AG04449 (cell line): ENCODE measurements at regions of chr12 and their contacts with region 1.

Region 1: GRCh38 chr12:106841510-106842302 is 67.2 kb downstream of the RIC8B start:
- DNase-seq: no peak
- H3K4me3 ChIP-seq: no peak overlapping the region
- CTCF ChIP-seq: peak; percentile 44

Region 2: DNA sequence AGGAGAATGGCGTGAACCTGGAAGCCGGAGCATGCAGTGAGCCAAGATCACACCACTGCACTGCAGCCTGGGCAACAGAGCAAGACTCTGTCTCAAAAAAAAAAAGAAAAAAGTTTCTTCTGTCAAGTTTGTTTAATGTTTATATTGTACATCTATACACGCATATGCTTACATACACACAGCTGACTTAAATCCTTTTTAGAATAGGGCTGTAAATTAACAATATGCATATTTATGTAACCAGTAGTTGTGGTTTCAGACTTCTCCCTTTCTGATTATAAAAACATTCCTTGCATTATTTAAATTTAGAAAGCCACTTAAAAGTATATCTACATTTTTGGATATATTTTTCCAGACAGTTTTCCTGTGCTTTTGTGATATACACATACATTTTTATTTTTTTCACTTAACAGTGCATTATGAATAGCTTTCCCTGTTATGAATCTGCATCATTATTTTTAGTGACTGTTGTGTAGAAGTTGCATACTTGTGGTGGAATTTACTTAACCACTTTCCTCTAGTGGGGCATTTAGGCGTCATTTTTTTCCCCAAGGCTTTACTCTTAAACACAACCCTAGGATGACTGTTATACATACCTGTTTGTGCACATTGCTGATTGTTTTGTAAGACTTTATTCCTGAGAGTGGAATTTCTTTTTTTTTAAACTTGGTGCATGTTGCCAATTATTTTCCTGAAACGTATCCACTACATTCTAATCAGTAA is 454.7 kb before region 1 on chr12:
- CTCF ChIA-PET with region 1: interaction called, 46 read pairs
- POLR2A ChIA-PET with region 1: no interaction called
- DNase-seq: peak; percentile 74
- H3K4me3 ChIP-seq: no peak overlapping the region
- CTCF ChIP-seq: no peak

Region 3: DNA sequence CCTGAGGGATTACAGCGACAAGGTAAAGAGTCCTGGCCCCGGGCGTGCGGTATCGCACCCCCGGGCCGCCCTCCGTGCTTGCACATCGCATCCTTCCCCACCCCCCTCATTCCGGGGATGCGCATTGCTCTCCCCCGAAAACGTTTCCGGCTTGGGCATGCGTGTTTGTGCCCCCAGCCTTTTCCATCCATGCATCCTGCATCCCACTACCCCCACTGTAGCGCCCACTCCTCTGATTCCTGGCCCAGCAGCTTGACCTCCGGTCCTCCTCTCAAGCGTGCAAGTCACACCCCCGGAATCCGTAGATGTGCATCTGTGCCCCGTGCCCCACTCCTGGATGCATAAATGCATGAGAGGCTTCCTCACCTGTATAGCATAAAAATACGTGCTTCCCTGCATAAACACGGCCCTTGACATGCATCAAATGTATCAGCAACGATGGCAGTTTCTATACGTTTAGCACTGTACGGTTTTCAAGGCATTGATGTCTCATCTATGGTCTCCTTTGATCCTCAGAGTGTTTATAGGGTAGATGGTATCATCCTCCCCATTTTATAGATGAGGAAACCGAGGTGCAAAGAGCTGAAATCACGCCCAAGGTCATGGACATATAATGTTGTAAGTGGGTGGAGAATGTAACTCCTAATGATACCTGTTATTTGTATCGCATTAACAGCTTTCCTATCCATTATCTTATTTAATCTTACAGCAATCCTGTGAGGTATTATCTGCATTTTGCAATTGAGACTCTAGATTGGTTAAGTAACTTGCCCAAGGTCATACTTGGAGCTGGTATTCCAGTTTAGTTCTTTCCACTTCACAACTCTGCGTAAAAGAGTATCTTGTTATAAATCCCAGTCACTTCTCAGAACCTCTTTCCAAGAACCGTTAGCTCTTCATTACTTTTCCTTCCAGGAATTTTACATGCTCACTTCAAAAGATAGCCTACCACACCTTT is 66.6 kb before region 1 on chr12:
- CTCF ChIA-PET with region 1: interaction called, 10 read pairs
- POLR2A ChIA-PET with region 1: no interaction called
- DNase-seq: no peak
- H3K4me3 ChIP-seq: peak overlapping the region; percentile 92
- CTCF ChIP-seq: no peak

Region 4: GRCh38 chr12:106831699-106832098 is 10.0 kb before region 1 on chr12:
- CTCF ChIA-PET with region 1: interaction called, 20 read pairs
- POLR2A ChIA-PET with region 1: no interaction called
- DNase-seq: no peak
- H3K4me3 ChIP-seq: no peak overlapping the region
- CTCF ChIP-seq: no peak

Region 5: DNA sequence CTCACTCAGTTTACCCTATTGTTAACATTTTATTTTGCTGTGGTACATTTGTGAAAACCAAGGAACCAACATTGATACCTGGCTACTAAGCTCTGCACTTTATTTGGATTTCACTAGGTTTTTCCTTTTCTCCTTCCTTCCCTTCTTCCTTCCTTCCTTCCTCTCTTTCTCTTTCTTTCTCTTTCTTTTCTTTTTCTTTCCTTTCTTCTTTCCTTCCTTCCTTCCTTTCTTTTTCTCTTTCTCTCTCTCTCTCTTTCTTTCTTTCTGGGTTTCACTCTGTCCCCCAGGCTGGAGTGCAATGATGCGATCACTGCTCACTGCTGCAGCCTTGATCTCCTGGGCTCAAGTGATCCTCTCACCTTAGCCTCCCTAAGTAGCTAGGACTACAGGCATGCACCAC is 85.0 kb after region 1 on chr12:
- CTCF ChIA-PET with region 1: no interaction called
- POLR2A ChIA-PET with region 1: no interaction called
- DNase-seq: no peak
- H3K4me3 ChIP-seq: no peak overlapping the region
- CTCF ChIP-seq: no peak

Region 6: DNA sequence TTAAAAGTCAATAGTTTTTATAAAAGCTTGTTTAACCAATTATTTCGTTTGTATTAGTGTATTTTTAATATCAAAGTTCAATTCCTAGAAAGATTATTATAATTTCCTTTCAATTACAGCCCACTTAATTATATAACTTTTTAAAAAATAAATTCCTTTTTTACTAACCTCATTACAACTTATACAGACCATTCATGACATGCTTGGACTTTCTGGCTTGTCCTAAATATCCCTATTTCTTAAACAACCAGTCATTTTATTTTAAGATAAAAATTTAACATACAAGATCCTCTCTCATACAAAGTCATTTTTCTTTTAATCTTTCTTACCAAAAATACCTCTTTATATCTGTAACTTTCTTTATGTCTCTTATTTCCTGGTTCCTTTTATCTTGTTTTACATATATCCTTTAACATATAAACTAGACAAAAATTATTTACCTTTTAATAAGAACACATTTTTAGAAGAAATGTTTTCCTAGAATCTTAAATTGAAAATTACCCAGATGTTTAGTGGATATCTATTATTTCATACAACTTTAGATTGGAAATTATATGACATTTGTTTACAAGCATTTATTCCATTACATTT is 103.7 kb after region 1 on chr12:
- CTCF ChIA-PET with region 1: no interaction called
- POLR2A ChIA-PET with region 1: no interaction called
- DNase-seq: no peak
- H3K4me3 ChIP-seq: no peak overlapping the region
- CTCF ChIP-seq: no peak

Region 7: DNA sequence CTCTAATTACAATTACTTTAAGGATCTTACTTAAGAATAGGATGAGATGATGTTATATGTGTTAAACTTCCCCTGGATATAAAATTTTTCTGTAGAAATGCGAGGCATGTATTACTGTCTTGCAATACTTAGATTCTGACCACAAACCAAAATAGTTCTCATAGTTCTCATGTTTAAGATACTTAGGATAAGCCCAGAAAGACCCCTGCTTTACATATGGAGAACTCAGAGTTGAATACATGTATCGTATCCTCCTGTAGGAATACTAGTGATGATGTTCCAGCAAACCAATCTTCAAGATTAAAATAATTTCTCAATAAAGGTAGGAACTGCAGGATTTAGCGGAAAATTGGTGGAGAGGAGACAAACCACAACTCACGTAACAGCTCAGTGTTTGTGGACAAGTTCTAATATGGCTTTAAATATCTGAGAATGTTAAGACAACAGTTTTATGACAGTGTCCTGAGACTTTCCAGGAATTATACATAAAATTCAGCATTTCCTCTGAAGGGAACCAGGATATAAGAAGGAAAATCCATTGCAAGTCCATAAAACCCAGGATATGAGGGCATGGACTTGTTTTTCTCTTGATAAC is 366.3 kb after region 1 on chr12:
- CTCF ChIA-PET with region 1: no interaction called
- POLR2A ChIA-PET with region 1: no interaction called
- DNase-seq: peak; percentile 29
- H3K4me3 ChIP-seq: no peak overlapping the region
- CTCF ChIP-seq: no peak